ENCODE measurements at regions of chr15 and their contacts with region 1.

Region 1: GRCh38 chr15:91271565-91272153 is 171.6 kb downstream of the SV2B start:
- DNase-seq: peak in 33 of 35 experiments; percentile 8 to 83 (median 44)
- ATAC-seq: peak; percentile 48 to 72 (median 68)
- H3K4me3 ChIP-seq: no peak overlapping the region
- H3K4me3 Mint-ChIP-seq: peak overlapping the region in 1 of 3 donors; percentile 36
- H3K27ac ChIP-seq: no peak overlapping the region
- H3K27ac Mint-ChIP-seq: peak overlapping the region; percentile 48 to 53
- H3K4me1 ChIP-seq: no peaks in the 10 kb centered on the region
- H3K4me1 Mint-ChIP-seq: peaks cover 0 to 9% (median 6%) of the 10 kb centered on the region in 3 donors
- H3K27me3 ChIP-seq: peaks cover 0 to 12% of the 10 kb centered on the region in 2 experiments
- H3K27me3 Mint-ChIP-seq: peaks cover 10 to 14% of the 10 kb centered on the region in 2 donors

Region 2: DNA sequence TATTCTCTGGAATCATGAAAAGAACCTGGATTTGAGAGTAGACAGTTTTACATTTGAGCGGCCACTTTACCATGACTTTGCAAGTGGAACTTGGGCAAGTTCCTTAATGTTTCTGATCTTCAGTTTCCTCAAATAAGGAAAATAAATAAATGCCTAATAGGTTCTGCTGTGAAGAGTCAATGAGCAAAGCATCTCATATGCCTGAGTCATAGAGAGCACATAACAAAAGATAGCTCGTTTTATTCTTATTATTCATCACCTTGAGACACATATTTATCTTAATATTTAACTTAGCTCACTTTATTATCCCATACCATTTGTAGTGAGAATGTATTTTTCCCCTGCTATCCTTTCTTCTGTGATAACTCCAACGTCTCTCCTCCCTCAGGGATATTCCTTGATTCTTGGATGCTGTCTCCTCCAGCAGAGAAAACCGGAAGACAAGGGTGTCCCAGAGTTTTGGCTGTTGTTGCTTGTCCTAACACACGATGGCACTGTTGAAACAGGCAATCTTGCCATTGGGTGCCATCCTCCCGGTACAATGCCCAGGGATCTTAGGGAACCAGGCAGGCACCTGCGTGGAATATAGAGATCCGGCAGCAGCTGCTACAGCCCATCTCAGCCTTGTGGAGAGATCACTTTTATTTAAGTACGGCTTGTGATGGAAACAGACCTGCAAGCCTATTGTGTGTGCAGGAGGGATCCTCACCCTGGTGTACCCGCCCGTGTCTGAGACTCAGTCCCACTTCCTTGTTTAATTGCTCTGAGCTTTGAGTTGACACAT is 215.9 kb before region 1 on chr15:
- CTCF ChIA-PET with region 1: interaction called, 15 to 33 read pairs
- POLR2A ChIA-PET with region 1: no interaction called
- DNase-seq: peak in 11 of 35 experiments; percentile 4 to 57 (median 9)
- ATAC-seq: peak in 3 of 4 experiments; percentile 31 to 51 (median 40)
- H3K4me3 ChIP-seq: no peak overlapping the region
- H3K4me3 Mint-ChIP-seq: no peak overlapping the region
- H3K27ac ChIP-seq: no peak overlapping the region
- H3K27ac Mint-ChIP-seq: no peak overlapping the region
- H3K4me1 ChIP-seq: peaks cover 0 to 3% of the 10 kb centered on the region in 2 experiments
- H3K4me1 Mint-ChIP-seq: peaks cover 0 to 5% (median 0%) of the 10 kb centered on the region in 3 donors
- H3K27me3 ChIP-seq: peaks cover 12 to 30% of the 10 kb centered on the region in 2 experiments
- H3K27me3 Mint-ChIP-seq: peaks cover 55 to 56% of the 10 kb centered on the region in 2 donors

Region 3: GRCh38 chr15:91192690-91193377 is 78.8 kb before region 1 on chr15:
- CTCF ChIA-PET with region 1: no interaction called
- POLR2A ChIA-PET with region 1: no interaction called
- DNase-seq: no peak
- ATAC-seq: no peak
- H3K4me3 ChIP-seq: no peak overlapping the region
- H3K4me3 Mint-ChIP-seq: no peak overlapping the region
- H3K27ac ChIP-seq: no peak overlapping the region
- H3K27ac Mint-ChIP-seq: no peak overlapping the region
- H3K4me1 ChIP-seq: no peaks in the 10 kb centered on the region
- H3K4me1 Mint-ChIP-seq: no peaks in the 10 kb centered on the region
- H3K27me3 ChIP-seq: peaks cover 4 to 15% of the 10 kb centered on the region in 2 experiments
- H3K27me3 Mint-ChIP-seq: peaks cover 26 to 43% of the 10 kb centered on the region in 2 donors

Region 4: DNA sequence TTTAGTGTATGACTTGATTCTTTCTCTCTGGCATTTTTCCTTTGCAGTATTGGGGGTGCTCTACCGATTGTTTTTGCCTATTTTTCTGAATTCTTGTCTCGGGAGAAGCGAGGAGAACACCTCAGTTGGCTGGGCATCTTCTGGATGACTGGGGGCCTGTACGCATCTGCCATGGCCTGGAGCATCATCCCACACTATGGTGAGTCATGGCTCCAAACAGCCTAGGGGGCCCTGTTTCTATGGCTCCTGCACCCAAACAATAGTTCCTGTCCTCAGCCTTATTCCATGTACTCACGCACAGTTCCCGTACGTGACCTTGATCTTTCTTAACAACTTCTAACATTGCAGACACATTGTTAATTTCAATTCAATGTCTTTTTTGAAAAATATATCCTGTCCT is 19.3 kb before region 1 on chr15:
- CTCF ChIA-PET with region 1: no interaction called
- POLR2A ChIA-PET with region 1: no interaction called
- DNase-seq: no peak
- ATAC-seq: no peak
- H3K4me3 ChIP-seq: no peak overlapping the region
- H3K4me3 Mint-ChIP-seq: no peak overlapping the region
- H3K27ac ChIP-seq: no peak overlapping the region
- H3K27ac Mint-ChIP-seq: no peak overlapping the region
- H3K4me1 ChIP-seq: no peaks in the 10 kb centered on the region
- H3K4me1 Mint-ChIP-seq: peaks cover 0 to 3% (median 3%) of the 10 kb centered on the region in 3 donors
- H3K27me3 ChIP-seq: peaks cover 0 to 11% of the 10 kb centered on the region in 2 experiments
- H3K27me3 Mint-ChIP-seq: peaks cover 27 to 44% of the 10 kb centered on the region in 2 donors

Region 5: DNA sequence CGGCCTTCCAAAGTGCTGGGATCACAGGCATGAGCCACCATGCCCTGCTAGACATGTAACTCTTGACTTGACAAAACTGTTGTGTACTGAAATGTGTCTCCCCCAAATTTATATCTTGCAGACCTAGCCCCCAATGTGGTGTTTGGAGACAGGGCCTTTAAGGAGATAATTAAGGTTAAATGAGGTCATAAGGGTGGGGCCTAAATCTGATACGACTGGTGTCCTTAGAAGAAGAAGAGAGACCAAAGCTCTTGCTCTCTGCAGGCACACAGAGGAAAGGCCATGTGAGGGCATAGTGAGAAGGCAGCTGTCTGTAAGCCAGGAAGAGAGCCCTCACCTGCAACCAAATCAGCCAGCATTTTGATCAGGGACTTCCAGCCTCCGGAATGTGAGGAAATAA is 189.7 kb after region 1 on chr15:
- CTCF ChIA-PET with region 1: no interaction called
- POLR2A ChIA-PET with region 1: no interaction called
- DNase-seq: no peak
- ATAC-seq: no peak
- H3K4me3 ChIP-seq: no peak overlapping the region
- H3K4me3 Mint-ChIP-seq: no peak overlapping the region
- H3K27ac ChIP-seq: no peak overlapping the region
- H3K27ac Mint-ChIP-seq: no peak overlapping the region
- H3K4me1 ChIP-seq: no peaks in the 10 kb centered on the region
- H3K4me1 Mint-ChIP-seq: peaks cover 0 to 15% (median 0%) of the 10 kb centered on the region in 3 donors
- H3K27me3 ChIP-seq: peaks cover 0 to 3% of the 10 kb centered on the region in 2 experiments
- H3K27me3 Mint-ChIP-seq: no peaks in the 10 kb centered on the region